ENCODE measurements at regions of chr9 and their contacts with region 1.

Region 1: DNA sequence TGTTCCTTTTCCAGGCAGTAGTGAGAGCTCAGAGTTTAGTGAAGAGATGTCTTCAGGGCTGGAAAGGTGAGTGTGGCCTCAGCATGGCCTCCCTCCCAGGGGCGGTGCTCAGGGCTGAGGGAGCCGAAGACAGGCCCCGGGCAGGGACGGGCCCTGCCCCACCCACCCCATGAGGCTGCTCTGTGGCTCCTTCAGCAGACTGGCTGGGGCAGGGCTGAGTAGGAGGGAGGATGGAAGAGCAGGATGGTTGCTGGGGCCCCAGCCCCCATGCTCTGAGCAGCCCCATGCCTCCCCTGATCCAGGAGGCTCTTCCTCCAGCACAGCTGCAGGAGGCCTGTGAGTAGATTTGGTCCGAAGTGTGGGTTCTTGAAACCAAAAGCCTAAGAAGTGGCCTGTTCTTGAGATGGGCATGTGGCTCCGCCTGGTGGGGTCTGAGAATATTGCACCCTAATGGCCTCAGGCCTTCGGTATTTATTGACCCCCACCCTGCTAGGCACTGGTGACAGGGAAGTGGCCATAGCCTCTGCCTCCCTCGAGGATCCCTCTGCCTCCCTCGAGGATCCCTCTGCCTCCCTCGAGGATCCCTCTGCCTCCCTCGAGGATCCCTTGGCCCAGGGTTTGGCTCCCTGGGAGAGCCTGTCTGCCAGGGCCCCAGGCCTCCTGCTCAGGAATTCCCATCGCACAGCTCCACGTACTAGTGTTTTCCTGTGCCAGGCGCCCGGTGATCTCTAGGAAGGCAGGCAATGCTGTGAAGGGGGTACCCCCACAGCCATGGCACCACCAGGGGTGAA is 65.4 kb upstream of the GARNL3 start:
- DNase-seq: peak; percentile 92
- ATAC-seq: peak; percentile 86
- H3K4me3 Mint-ChIP-seq: no peak overlapping the region
- H3K27ac Mint-ChIP-seq: no peak overlapping the region
- H3K4me1 Mint-ChIP-seq: peaks cover 7% of the 10 kb centered on the region
- H3K27me3 Mint-ChIP-seq: no peaks in the 10 kb centered on the region
- CTCF ChIP-seq: peak; percentile 91

Region 2: GRCh38 chr9:126939821-126940221 is 259.4 kb before region 1 on chr9:
- CTCF ChIA-PET with region 1: interaction called, 60 read pairs
- POLR2A ChIA-PET with region 1: interaction called, 3 read pairs
- DNase-seq: no peak
- ATAC-seq: no peak
- H3K4me3 Mint-ChIP-seq: no peak overlapping the region
- H3K27ac Mint-ChIP-seq: no peak overlapping the region
- H3K4me1 Mint-ChIP-seq: peaks cover 16% of the 10 kb centered on the region
- H3K27me3 Mint-ChIP-seq: no peaks in the 10 kb centered on the region
- CTCF ChIP-seq: no peak

Region 3: GRCh38 chr9:126947529-126947928 is 251.7 kb before region 1 on chr9:
- CTCF ChIA-PET with region 1: interaction called, 60 read pairs
- POLR2A ChIA-PET with region 1: no interaction called
- DNase-seq: peak; percentile 54
- ATAC-seq: peak; percentile 100
- H3K4me3 Mint-ChIP-seq: no peak overlapping the region
- H3K27ac Mint-ChIP-seq: peak overlapping the region; percentile 64; the same call in 1 of the 2 replicates
- H3K4me1 Mint-ChIP-seq: peaks cover 10% of the 10 kb centered on the region
- H3K27me3 Mint-ChIP-seq: no peaks in the 10 kb centered on the region; the same call in 1 of the 2 replicates
- CTCF ChIP-seq: no peak; the same call in 1 of the 2 replicates

Region 4: GRCh38 chr9:126965541-126966428 is 233.4 kb before region 1 on chr9:
- CTCF ChIA-PET with region 1: interaction called, 22 read pairs
- POLR2A ChIA-PET with region 1: interaction called, 3 read pairs
- DNase-seq: peak; percentile 57
- ATAC-seq: peak; percentile 94
- H3K4me3 Mint-ChIP-seq: no peak overlapping the region
- H3K27ac Mint-ChIP-seq: peak overlapping the region; percentile 78
- H3K4me1 Mint-ChIP-seq: peaks cover 16% of the 10 kb centered on the region
- H3K27me3 Mint-ChIP-seq: no peaks in the 10 kb centered on the region
- CTCF ChIP-seq: peak; percentile 34; the same call in 1 of the 2 replicates

Region 5: GRCh38 chr9:127122176-127123063 is 76.8 kb before region 1 on chr9 and contains the start of gene ANGPTL2:
- CTCF ChIA-PET with region 1: interaction called, 12 read pairs
- POLR2A ChIA-PET with region 1: no interaction called
- DNase-seq: peak; percentile 91
- ATAC-seq: peak; percentile 92
- H3K4me3 Mint-ChIP-seq: peak within 1 kb of the TSS; percentile 77
- H3K27ac Mint-ChIP-seq: peak within 1 kb of the TSS; percentile 54; the same call in 1 of the 2 replicates
- H3K4me1 Mint-ChIP-seq: peaks cover 29% of the 10 kb centered on the region
- H3K27me3 Mint-ChIP-seq: no peaks in the 10 kb centered on the region; the same call in none of the 2 replicates
- CTCF ChIP-seq: no peak
- total RNA-seq, gene ANGPTL2: 4.5 to 6.7 TPM (median 6.3 TPM) in 3 replicates

Region 6: DNA sequence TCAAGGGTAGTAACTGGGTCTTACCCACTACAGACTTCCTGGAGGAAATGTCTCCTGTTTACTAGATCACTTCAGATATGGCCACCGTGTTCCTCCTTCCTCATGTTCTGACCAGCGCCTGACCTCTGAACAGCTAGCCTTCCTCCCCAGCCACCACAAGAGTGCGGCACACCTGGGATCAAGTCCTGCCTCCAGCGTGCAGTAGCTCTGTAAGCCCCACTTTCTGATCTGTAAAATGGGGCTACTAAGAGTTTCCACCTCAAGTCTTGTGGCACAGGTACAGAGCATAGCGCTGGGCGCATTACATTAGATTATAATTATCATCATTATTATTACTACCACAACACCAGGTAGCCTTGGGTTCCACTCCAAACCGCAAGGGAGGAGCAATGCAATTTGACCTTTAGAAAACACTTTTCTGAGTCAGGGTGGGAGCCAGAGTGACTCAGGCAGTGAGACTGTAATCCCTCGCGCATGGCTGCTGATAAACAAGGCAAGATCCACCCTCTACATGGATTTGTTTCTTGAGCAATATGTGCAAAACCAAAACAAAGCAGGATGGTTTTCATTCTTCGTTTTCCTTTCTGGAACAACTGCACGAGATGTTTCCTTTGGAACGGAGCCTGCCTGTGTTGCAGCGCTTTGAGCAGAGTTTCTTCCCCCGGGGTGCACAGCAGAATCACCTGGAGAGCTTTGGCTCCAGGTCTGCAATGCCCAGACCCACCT is 11.8 kb before region 1 on chr9:
- CTCF ChIA-PET with region 1: interaction called, 10 read pairs
- POLR2A ChIA-PET with region 1: no interaction called
- DNase-seq: no peak
- ATAC-seq: no peak
- H3K4me3 Mint-ChIP-seq: no peak overlapping the region
- H3K27ac Mint-ChIP-seq: peak overlapping the region; percentile 60; the same call in 1 of the 2 replicates
- H3K4me1 Mint-ChIP-seq: peaks cover 12% of the 10 kb centered on the region
- H3K27me3 Mint-ChIP-seq: no peaks in the 10 kb centered on the region
- CTCF ChIP-seq: no peak

Region 7: GRCh38 chr9:127406799-127407509 is 207.8 kb after region 1 on chr9:
- CTCF ChIA-PET with region 1: no interaction called
- POLR2A ChIA-PET with region 1: no interaction called
- DNase-seq: peak; percentile 11
- ATAC-seq: no peak
- H3K4me3 Mint-ChIP-seq: no peak overlapping the region
- H3K27ac Mint-ChIP-seq: peak overlapping the region; percentile 65; the same call in 1 of the 2 replicates
- H3K4me1 Mint-ChIP-seq: no peaks in the 10 kb centered on the region
- H3K27me3 Mint-ChIP-seq: no peaks in the 10 kb centered on the region
- CTCF ChIP-seq: no peak

Measured in WTC11 (cell line).